MCF 10A (cell line): ENCODE measurements at regions of chr2 and their contacts with region 1.

Region 1: DNA sequence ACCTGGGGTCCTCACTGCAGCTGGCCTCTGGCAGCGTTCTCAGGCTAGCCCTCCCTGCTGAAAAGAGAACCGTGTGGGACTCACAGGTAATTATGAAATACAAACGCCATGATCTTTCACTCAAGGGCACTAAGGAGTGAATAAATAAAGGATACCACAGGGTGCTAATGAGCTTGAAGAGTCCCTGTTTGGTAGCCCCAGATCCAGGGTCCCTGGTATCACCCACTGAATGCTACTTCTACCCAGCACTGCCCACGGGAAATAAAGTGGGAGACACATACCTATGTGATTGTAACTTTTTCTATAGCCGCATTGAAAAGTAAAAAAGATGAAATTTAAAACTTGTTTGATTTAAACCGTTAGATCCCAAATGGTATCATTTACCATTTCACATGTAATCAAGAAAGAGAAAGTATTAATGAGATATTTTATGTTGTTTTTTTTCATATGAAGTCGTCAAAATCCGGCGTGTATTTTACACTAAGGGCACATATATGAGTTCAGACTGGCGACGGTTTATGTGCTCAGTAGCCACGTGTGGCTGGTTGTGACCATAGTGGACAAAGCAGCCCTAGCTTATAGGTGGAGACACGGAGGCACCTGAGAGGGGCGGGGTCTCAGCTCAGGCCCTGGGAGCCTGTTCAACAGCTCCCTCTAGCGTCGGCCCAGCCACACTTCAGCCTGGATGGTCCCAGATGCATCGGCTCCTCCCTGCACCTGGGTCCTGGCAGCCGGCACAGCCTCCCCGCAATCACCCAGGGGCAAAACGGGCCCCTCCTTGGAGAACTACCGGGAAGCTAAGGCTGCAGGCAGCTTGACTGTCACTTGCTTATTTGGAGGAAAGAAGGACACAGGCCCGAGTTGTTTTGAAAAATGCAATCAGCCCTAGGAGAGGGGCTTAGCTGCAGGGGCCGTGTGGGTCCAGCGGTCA is 39.2 kb downstream of the ODC1 start:
- DNase-seq: peak; percentile 90
- H3K4me3 Mint-ChIP-seq: peak overlapping the region; percentile 58
- H3K27ac Mint-ChIP-seq: peak overlapping the region; percentile 72
- H3K4me1 Mint-ChIP-seq: peaks cover 53% of the 10 kb centered on the region
- H3K27me3 Mint-ChIP-seq: no peaks in the 10 kb centered on the region
- CTCF ChIP-seq: peak; percentile 97

Region 2: GRCh38 chr2:10122386-10123280 is 286.3 kb before region 1 on chr2 and contains the start of gene RRM2:
- CTCF ChIA-PET with region 1: interaction called, 126 read pairs
- POLR2A ChIA-PET with region 1: interaction called, 58 read pairs
- intact Hi-C with region 1: loop called (anchors 1 kb)
- DNase-seq: peak; percentile 96
- H3K4me3 Mint-ChIP-seq: peak within 1 kb of the TSS; percentile 97
- H3K27ac Mint-ChIP-seq: peak within 1 kb of the TSS; percentile 84
- H3K4me1 Mint-ChIP-seq: peaks cover 19% of the 10 kb centered on the region
- H3K27me3 Mint-ChIP-seq: no peaks in the 10 kb centered on the region
- CTCF ChIP-seq: no peak
- total RNA-seq, gene RRM2: 16.5 and 41.8 TPM in 2 replicates

Region 3: DNA sequence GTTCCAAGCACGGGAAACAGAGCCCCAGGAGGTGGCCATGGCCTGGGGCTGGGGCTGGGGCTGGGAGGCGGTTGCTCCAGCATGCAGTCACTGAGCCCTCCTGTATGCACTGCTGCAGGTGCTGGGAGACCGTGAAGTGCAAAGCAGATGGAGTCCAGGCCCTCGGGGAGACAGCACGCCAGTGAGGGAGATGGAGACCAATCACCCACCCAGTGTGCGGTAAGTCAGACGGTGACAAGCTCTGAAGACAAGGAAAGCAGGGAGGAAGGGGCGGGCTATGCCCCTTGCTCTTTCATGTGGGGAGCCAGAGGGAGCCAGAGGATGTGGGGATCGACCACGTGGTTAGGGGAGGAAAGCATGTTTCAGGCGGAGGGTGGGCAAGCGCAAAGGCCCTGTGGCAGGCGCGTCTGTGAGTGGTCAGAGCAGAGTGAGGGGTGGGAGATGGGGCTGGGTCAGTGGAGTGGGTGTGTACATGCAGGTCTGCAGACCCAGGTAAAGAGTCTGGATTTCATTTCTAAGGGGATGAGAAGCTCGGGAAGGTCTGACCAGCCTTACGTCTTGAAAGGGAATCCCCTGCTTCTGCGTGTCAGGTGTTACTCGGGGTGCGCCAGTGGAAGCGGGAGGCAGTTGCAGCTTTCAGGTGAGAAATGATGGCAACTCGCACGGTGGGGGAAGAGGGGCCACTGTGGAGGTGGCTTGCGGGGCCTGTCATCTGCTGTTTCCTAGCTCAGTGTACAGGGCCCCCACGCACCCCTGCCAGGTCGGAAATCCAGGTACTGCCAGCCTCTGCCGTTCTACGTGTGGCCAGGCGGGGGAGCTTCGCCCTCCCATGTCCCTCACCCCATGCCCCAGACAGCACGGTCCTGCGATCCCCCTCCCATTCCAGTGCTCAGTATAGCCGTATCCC is 266.9 kb before region 1 on chr2:
- CTCF ChIA-PET with region 1: interaction called, 85 read pairs
- POLR2A ChIA-PET with region 1: interaction called, 10 read pairs
- intact Hi-C with region 1: loop called (anchors 5 kb)
- DNase-seq: peak; percentile 28
- H3K4me3 Mint-ChIP-seq: no peak overlapping the region
- H3K27ac Mint-ChIP-seq: no peak overlapping the region
- H3K4me1 Mint-ChIP-seq: peaks cover 5% of the 10 kb centered on the region
- H3K27me3 Mint-ChIP-seq: no peaks in the 10 kb centered on the region
- CTCF ChIP-seq: peak; percentile 52

Region 4: DNA sequence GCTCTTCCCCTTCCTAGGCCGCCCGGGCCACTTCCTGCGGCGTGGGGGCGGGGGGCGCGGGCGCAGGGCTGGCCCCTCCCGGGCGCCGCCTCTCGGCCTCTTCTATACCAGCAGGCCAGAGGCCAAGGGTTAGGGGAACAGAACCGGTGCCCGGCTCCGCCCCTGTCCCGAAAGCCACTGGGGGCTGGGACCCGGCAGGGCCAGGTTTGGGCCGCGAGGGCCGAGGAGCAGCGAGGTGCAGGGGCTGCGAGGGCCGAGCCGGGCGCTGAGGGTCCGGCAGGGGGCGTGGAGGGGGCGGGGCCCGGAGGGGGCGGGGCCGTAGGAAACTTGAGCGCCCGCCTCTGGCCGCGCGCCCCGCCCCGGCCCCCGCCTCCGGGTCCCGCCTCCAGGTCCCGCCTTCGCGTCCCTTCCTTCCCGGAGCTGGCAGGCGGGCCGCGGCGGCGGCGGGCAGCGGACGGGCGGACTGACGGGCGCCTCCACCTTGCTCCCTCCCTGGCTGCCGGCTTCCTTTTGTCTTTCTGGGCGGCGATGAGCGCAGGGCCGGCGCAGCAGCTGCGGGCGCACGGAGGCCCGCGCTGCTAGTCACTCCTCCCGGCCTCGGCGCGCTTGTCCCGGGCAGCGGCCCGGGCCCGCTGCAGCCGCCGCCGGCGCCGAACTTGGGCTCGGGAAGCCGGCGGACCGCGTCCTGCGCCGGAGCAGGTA is 106.3 kb before region 1 on chr2 and contains the start of gene HPCAL1:
- CTCF ChIA-PET with region 1: interaction called, 77 read pairs
- POLR2A ChIA-PET with region 1: interaction called, 44 read pairs
- intact Hi-C with region 1: loop called (anchors 1 kb)
- DNase-seq: peak; percentile 87
- H3K4me3 Mint-ChIP-seq: peak within 1 kb of the TSS; percentile 98
- H3K27ac Mint-ChIP-seq: peak within 1 kb of the TSS; percentile 90
- H3K4me1 Mint-ChIP-seq: peaks cover 26% of the 10 kb centered on the region
- H3K27me3 Mint-ChIP-seq: no peaks in the 10 kb centered on the region
- CTCF ChIP-seq: peak; percentile 81
- total RNA-seq, gene HPCAL1: 136 and 144 TPM in 2 replicates

Region 5: DNA sequence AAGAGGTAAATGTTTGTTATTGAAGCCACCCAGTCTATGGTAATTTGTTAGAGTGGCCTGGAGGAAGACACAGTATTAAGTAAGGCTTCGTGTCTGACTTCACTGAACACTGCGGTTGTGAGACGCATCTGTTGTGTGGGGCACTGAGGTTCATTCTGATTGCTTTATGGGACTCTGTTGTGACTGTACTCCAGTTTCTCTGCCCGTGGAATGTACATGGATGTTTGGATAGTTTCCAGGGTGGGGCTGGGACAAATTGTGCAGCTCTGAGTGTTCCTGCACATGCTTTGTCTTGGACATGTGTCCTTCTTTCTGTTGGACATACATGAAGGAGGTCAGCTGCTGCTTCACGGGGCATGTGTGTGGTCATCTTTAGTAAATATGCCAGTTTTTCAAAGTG is 19.3 kb before region 1 on chr2:
- CTCF ChIA-PET with region 1: interaction called, 83 read pairs
- POLR2A ChIA-PET with region 1: interaction called, 80 read pairs
- intact Hi-C with region 1: no loop called
- DNase-seq: peak; percentile 59
- H3K4me3 Mint-ChIP-seq: peak overlapping the region; percentile 50
- H3K27ac Mint-ChIP-seq: peak overlapping the region; percentile 87
- H3K4me1 Mint-ChIP-seq: peaks cover 57% of the 10 kb centered on the region
- H3K27me3 Mint-ChIP-seq: no peaks in the 10 kb centered on the region
- CTCF ChIP-seq: no peak